Right ventricle myocardium superior (tissue), 1 donor: ENCODE measurements at regions of chr13 and their contacts with region 1.

Region 1: GRCh38 chr13:75806117-75806516 is 170.0 kb downstream of the LMO7 start:
- DNase-seq: no peak
- ATAC-seq: peak; percentile 37

Region 2: GRCh38 chr13:75607451-75607850 is 198.7 kb before region 1 on chr13:
- intact Hi-C with region 1: no loop called
- DNase-seq: no peak
- ATAC-seq: no peak

Region 3: DNA sequence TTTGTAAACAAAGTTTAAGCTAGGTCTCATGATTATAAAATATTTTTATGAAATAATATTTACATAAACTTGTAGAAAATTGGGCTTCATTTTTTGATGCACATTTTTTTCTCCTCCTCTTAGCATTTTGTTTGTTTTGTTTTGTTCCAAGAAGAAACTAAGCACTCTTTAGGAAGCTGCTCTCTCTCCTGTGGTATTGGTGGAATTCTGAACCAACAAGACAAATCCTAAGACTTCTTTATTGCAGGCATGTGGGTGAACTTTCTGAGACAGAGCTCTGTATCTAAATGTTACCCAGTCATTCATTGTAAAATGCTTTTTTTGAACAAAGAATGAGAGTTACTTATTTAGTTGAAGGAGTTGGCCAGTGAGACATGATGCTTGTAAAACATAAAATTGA is 130.7 kb before region 1 on chr13:
- intact Hi-C with region 1: no loop called
- DNase-seq: no peak
- ATAC-seq: no peak

Region 4: DNA sequence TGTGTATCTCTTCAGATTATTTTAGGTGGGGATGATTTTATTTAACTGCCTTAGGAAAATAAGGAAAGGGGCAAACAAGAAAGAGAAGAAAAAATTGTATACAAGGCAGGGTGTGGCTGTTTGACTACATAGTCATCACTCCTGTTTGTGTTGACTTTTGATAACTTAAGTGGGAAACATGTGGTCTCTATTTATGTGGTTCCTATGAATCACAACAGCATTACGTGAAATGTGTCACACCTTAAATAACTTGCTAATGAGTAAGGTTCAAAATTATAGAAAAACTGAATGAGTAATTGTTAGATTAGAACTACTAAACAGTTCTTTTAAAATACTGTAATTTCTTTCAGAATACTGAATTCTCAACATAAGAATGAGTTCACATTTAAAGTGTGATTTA is 100.7 kb before region 1 on chr13:
- intact Hi-C with region 1: no loop called
- DNase-seq: no peak
- ATAC-seq: no peak

Region 5: DNA sequence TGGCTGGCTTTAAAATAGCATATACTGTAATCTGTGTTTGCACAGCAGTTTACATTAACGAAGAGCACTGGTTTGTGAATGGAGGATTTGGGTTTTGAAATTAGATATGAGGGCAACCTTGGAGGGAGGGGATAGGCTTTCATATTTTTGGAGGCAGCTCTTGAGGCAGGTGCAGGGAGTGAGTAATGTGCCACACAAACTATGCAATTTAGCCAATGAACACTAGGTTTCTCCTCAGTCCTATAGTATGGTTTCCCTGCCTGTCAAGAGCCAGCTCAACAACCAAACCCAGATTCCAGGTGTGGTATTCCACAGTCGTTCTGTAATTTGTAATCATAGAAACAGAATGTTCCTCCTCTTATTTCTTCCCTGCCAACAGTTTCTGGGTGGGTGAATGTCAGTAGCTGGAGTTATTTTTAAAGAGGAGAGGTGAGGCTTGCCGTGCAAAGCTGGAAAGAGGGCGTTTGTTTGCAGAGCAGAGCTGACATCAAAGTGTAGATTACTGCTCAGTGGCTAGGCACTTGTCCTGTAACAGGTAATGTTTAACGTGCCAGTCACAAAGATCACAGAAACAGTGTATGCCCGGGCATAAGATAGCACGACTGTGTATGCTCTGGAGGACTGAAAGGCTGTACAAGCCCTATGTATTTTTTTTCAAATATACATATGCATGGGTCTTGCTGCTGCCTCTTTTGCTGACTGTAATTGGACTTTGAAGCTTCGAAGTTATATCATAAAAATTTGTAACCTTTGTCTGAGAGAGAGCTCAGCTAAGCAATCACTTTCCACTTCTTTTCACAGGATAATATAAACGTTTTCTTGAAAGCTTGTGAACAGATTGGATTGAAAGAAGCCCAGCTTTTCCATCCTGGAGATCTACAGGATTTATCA is 45.7 kb before region 1 on chr13:
- intact Hi-C with region 1: loop called (anchors 5 kb)
- DNase-seq: no peak
- ATAC-seq: peak; percentile 72